Naive thymus-derived CD4-positive, alpha-beta T cell (primary cell): ENCODE measurements at regions of chr2 and their contacts with region 1.

Region 1: GRCh38 chr2:74715078-74715791 is 61.2 kb downstream of the SEMA4F start:
- DNase-seq: peak; percentile 61 to 84 (median 75)
- ATAC-seq: peak; percentile 94
- H3K4me3 ChIP-seq: peak overlapping the region; percentile 52
- H3K4me3 Mint-ChIP-seq: peak overlapping the region; percentile 82 to 98 (median 90)
- H3K27ac ChIP-seq: no peak overlapping the region
- H3K27ac Mint-ChIP-seq: peak overlapping the region in 5 of 9 donors; percentile 3 to 68 (median 21)
- H3K4me1 ChIP-seq: no peaks in the 10 kb centered on the region
- H3K4me1 Mint-ChIP-seq: peaks cover 4 to 10% (median 8%) of the 10 kb centered on the region in 7 donors
- H3K27me3 ChIP-seq: peaks cover 0 to 8% of the 10 kb centered on the region in 2 donors
- H3K27me3 Mint-ChIP-seq: peaks cover 0 to 21% (median 8%) of the 10 kb centered on the region in 5 donors

Region 2: GRCh38 chr2:74762789-74763188 is 47.6 kb after region 1 on chr2:
- CTCF ChIA-PET with region 1: interaction called, 3 read pairs
- POLR2A ChIA-PET with region 1: no interaction called
- intact Hi-C with region 1: loop called in 1 of 2 experiments (anchors 2 kb)
- DNase-seq: no peak
- ATAC-seq: no peak
- H3K4me3 ChIP-seq: no peak overlapping the region
- H3K4me3 Mint-ChIP-seq: no peak overlapping the region
- H3K27ac ChIP-seq: no peak overlapping the region
- H3K27ac Mint-ChIP-seq: no peak overlapping the region
- H3K4me1 ChIP-seq: no peaks in the 10 kb centered on the region
- H3K4me1 Mint-ChIP-seq: peaks cover 10 to 18% (median 16%) of the 10 kb centered on the region in 7 donors
- H3K27me3 ChIP-seq: no peaks in the 10 kb centered on the region
- H3K27me3 Mint-ChIP-seq: peaks cover 0 to 3% (median 0%) of the 10 kb centered on the region in 5 donors

Region 3: DNA sequence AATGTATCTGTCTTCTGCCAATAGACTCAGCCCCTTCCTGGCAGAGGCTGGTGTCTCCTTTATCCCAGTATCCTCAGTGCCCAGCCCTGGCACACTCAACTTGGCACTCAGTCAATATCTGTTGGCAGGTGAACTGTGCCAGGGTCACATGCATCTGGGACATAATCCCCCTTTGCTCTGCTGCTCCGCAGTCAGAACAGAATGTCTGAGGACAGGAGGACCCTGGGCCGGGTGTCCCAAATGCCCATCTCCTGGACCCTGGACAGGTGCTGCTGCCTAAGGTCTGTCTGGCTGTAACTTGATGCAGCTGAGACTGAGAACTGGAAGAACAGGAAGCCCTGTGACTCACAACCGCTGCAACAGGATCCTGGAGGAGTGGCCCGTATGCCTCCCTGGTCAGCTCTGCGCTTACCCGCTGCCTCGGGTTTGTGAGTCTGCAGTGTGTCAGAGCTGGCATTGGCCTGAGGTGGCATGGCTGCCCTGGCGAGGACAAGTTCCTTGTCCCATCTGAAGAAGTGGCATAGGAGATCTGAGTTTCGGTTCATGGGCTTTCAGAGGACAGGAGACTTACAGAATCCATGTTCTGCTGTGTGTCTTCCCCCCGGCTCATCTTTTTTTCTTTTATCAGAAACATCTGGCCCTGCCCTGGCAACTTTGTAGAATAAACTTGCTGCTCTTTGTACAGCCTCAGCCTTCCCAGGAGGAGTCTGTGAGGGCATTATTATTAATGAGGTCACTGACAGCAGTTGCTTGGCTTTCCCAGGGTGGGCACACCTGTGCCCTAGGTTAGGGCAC is 130.2 kb after region 1 on chr2:
- CTCF ChIA-PET with region 1: interaction called, 10 read pairs
- POLR2A ChIA-PET with region 1: interaction called, 3 read pairs
- intact Hi-C with region 1: loop called in 1 of 2 experiments (anchors 1 kb)
- DNase-seq: peak in 2 of 9 donors; percentile 23 to 51
- ATAC-seq: peak; percentile 70
- H3K4me3 ChIP-seq: peak overlapping the region; percentile 29
- H3K4me3 Mint-ChIP-seq: peak overlapping the region; percentile 65 to 87 (median 78)
- H3K27ac ChIP-seq: peak overlapping the region; percentile 39
- H3K27ac Mint-ChIP-seq: peak overlapping the region; percentile 85 to 99 (median 94)
- H3K4me1 ChIP-seq: peaks cover 37 to 97% of the 10 kb centered on the region in 2 donors
- H3K4me1 Mint-ChIP-seq: peaks cover 75 to 100% (median 97%) of the 10 kb centered on the region in 7 donors
- H3K27me3 ChIP-seq: no peaks in the 10 kb centered on the region
- H3K27me3 Mint-ChIP-seq: no peaks in the 10 kb centered on the region

Region 4: GRCh38 chr2:74876081-74876886 is 161.0 kb after region 1 on chr2:
- CTCF ChIA-PET with region 1: interaction called, 119 read pairs
- POLR2A ChIA-PET with region 1: interaction called, 5 read pairs
- intact Hi-C with region 1: loop called (anchors 1 kb)
- DNase-seq: peak in 7 of 9 donors; percentile 36 to 80 (median 76)
- ATAC-seq: peak; percentile 74
- H3K4me3 ChIP-seq: no peak overlapping the region
- H3K4me3 Mint-ChIP-seq: no peak overlapping the region
- H3K27ac ChIP-seq: no peak overlapping the region
- H3K27ac Mint-ChIP-seq: peak overlapping the region in 6 of 9 donors; percentile 20 to 78 (median 62)
- H3K4me1 ChIP-seq: peaks cover 0 to 3% of the 10 kb centered on the region in 2 donors
- H3K4me1 Mint-ChIP-seq: peaks cover 3 to 14% (median 6%) of the 10 kb centered on the region in 7 donors
- H3K27me3 ChIP-seq: no peaks in the 10 kb centered on the region
- H3K27me3 Mint-ChIP-seq: no peaks in the 10 kb centered on the region